Activated CD4-positive, alpha-beta memory T cell treated with anti-CD3 and anti-CD28 coated beads for 36 hours (primary cell): ENCODE measurements at regions of chr14 and their contacts with region 1.

Region 1: GRCh38 chr14:71960494-71961353 is 28.5 kb downstream of the RGS6 start:
- DNase-seq: no peak
- H3K4me3 Mint-ChIP-seq: no peak overlapping the region
- H3K27ac Mint-ChIP-seq: no peak overlapping the region
- H3K4me1 Mint-ChIP-seq: no peaks in the 10 kb centered on the region
- H3K27me3 Mint-ChIP-seq: peaks cover 28% of the 10 kb centered on the region

Region 2: GRCh38 chr14:71491931-71492330 is 468.8 kb before region 1 on chr14:
- CTCF ChIA-PET with region 1: no interaction called
- POLR2A ChIA-PET with region 1: no interaction called
- intact Hi-C with region 1: loop called (anchors 5 kb)
- DNase-seq: no peak
- H3K4me3 Mint-ChIP-seq: no peak overlapping the region
- H3K27ac Mint-ChIP-seq: no peak overlapping the region
- H3K4me1 Mint-ChIP-seq: peaks cover 11% of the 10 kb centered on the region
- H3K27me3 Mint-ChIP-seq: no peaks in the 10 kb centered on the region

Region 3: GRCh38 chr14:72023722-72024407 is 63.1 kb after region 1 on chr14:
- CTCF ChIA-PET with region 1: no interaction called
- POLR2A ChIA-PET with region 1: no interaction called
- intact Hi-C with region 1: no loop called
- DNase-seq: peak; percentile 60
- H3K4me3 Mint-ChIP-seq: no peak overlapping the region
- H3K27ac Mint-ChIP-seq: no peak overlapping the region
- H3K4me1 Mint-ChIP-seq: peaks cover 3% of the 10 kb centered on the region
- H3K27me3 Mint-ChIP-seq: peaks cover 25% of the 10 kb centered on the region